ENCODE measurements at regions of chr10 and their contacts with region 1.

Region 1: GRCh38 chr10:49164559-49165188 is 23.5 kb downstream of the TMEM273 start:
- DNase-seq: peak in 6 of 7 donors; percentile 36 to 70 (median 58)
- H3K4me3 ChIP-seq: no peak overlapping the region
- H3K27ac ChIP-seq: no peak overlapping the region
- H3K4me1 ChIP-seq: no peaks in the 10 kb centered on the region
- H3K27me3 ChIP-seq: no peaks in the 10 kb centered on the region
- CTCF ChIP-seq: peak; percentile 55 to 83 (median 80)
- POLR2A ChIP-seq: no peak

Region 2: GRCh38 chr10:48976196-48976595 is 188.5 kb before region 1 on chr10:
- intact Hi-C with region 1: loop called (anchors 5 kb)
- DNase-seq: peak; percentile 31 to 70 (median 49)
- H3K4me3 ChIP-seq: no peak overlapping the region
- H3K27ac ChIP-seq: no peak overlapping the region
- H3K4me1 ChIP-seq: no peaks in the 10 kb centered on the region
- H3K27me3 ChIP-seq: no peaks in the 10 kb centered on the region
- CTCF ChIP-seq: peak in 5 of 6 experiments; percentile 35 to 53 (median 37)
- POLR2A ChIP-seq: no peak

Region 3: GRCh38 chr10:48981310-48981907 is 183.3 kb before region 1 on chr10:
- intact Hi-C with region 1: loop called (anchors 5 kb)
- DNase-seq: peak; percentile 59 to 85 (median 72)
- H3K4me3 ChIP-seq: no peak overlapping the region
- H3K27ac ChIP-seq: no peak overlapping the region
- H3K4me1 ChIP-seq: peaks cover 0 to 9% of the 10 kb centered on the region in 2 donors
- H3K27me3 ChIP-seq: no peaks in the 10 kb centered on the region
- CTCF ChIP-seq: peak; percentile 73 to 91 (median 86)
- POLR2A ChIP-seq: no peak